HEK293 (cell line): ENCODE measurements at regions of chr17 and their contacts with region 1.

Region 1: GRCh38 chr17:40531051-40531991 is 29.9 kb upstream of the TNS4 start:
- H3K4me3 ChIP-seq: no peak overlapping the region
- H3K27ac ChIP-seq: no peak overlapping the region
- H3K4me1 ChIP-seq: no peaks in the 10 kb centered on the region
- CTCF ChIP-seq: no peak

Region 2: GRCh38 chr17:40382251-40382650 is 149.1 kb before region 1 on chr17:
- CTCF ChIA-PET with region 1: interaction called, 10 read pairs
- POLR2A ChIA-PET with region 1: interaction called, 3 read pairs
- H3K4me3 ChIP-seq: no peak overlapping the region
- H3K27ac ChIP-seq: no peak overlapping the region
- H3K4me1 ChIP-seq: no peaks in the 10 kb centered on the region
- CTCF ChIP-seq: no peak

Region 3: GRCh38 chr17:40417609-40418427 is 113.5 kb before region 1 on chr17 and contains the start of gene TOP2A:
- CTCF ChIA-PET with region 1: interaction called, 84 read pairs
- POLR2A ChIA-PET with region 1: interaction called, 18 read pairs
- H3K4me3 ChIP-seq: peak within 1 kb of the TSS; percentile 96
- H3K27ac ChIP-seq: peak within 1 kb of the TSS; percentile 94
- H3K4me1 ChIP-seq: peaks cover 3% of the 10 kb centered on the region
- CTCF ChIP-seq: 0 out of 2 replicates have a peak, but pooled peaks have one; percentile 5

Region 4: GRCh38 chr17:40457964-40458791 is 73.1 kb before region 1 on chr17:
- CTCF ChIA-PET with region 1: interaction called, 10 read pairs
- POLR2A ChIA-PET with region 1: no interaction called
- H3K4me3 ChIP-seq: no peak overlapping the region
- H3K27ac ChIP-seq: no peak overlapping the region
- H3K4me1 ChIP-seq: peaks cover 8% of the 10 kb centered on the region; the same call in 1 of the 2 replicates
- CTCF ChIP-seq: no peak

Region 5: DNA sequence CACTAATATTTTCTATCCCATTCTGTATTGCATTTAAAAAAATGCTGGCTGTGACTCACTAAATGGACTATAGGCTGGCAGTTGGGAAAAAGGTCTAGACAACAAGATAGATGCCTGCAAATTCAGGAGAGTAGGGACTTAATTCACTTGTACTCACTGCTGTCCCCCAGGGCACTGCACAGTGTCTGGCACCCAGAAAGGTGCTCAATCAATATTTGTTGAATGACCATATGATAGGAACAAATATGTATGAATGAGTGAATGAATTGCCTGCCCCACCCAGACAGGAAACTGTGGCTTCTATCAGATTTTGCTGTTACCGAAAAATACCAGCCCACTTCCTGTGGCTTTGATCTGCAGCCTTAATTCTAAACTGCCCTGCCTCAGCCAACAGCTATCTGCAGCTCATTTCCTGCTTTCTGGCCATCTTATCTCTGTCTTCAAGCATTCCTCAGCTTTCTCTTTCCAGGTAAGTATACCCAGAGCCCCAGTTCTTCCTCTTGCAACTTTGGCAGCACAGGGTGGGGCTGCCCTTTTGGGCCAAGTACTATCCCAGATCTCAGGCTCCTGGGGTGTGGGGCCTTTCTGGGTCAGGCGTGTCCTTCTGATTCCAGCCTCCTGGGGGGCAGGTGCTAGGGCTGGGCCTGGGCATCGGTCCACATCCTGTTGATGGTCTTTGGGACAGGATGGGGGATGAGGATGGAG is 14.6 kb before region 1 on chr17:
- CTCF ChIA-PET with region 1: interaction called, 28 read pairs
- POLR2A ChIA-PET with region 1: interaction called, 4 read pairs
- H3K4me3 ChIP-seq: no peak overlapping the region
- H3K27ac ChIP-seq: no peak overlapping the region
- H3K4me1 ChIP-seq: no peaks in the 10 kb centered on the region
- CTCF ChIP-seq: no peak